ENCODE measurements at regions of chr4 and their contacts with region 1.

Region 1: DNA sequence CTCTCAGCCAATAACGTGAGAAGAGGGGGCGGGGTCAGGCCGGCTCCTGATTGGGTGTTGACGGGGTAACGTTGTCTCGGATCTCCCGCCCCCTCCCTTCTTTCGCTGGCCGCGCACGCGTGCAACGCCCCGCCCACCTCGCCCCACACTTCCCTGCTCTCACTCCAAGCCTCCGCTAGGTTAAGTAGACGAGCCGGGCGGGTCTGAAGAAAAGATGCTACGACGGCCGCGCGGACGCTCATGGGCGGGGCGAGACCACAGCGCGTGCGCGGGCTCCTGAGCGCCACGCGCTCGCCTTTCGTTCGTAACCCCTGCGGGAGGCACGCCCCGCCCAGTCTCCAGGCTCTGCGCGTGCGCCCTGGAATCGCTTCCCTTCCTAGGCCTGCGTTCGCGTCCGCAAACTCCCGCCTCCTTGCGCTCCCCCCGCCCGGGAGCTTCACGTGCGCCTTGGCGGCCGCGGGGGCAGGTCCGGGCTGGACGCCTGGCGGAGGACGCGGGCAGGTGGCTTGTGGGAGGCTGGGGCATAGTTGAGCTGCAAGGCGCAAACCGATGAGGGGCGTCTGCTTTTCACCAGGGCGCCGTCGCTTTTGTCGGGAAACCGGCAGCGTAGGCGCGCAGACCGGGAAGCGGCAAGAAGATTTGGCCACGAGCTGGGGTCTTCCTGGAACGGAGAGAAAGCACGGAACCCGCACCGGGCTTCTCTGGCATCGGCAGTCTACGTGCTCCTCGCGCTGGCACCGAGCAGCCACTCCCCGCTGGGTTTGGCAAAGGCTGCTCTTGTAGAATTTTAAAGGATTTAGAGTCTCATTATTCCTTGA is 467 bp upstream of the PGRMC2 start:
- DNase-seq: peak; percentile 99
- H3K4me3 Mint-ChIP-seq: peak overlapping the region; percentile 85
- H3K27ac Mint-ChIP-seq: peak overlapping the region; percentile 94
- H3K4me1 Mint-ChIP-seq: peaks cover 19% of the 10 kb centered on the region
- H3K27me3 Mint-ChIP-seq: no peaks in the 10 kb centered on the region

Region 2: DNA sequence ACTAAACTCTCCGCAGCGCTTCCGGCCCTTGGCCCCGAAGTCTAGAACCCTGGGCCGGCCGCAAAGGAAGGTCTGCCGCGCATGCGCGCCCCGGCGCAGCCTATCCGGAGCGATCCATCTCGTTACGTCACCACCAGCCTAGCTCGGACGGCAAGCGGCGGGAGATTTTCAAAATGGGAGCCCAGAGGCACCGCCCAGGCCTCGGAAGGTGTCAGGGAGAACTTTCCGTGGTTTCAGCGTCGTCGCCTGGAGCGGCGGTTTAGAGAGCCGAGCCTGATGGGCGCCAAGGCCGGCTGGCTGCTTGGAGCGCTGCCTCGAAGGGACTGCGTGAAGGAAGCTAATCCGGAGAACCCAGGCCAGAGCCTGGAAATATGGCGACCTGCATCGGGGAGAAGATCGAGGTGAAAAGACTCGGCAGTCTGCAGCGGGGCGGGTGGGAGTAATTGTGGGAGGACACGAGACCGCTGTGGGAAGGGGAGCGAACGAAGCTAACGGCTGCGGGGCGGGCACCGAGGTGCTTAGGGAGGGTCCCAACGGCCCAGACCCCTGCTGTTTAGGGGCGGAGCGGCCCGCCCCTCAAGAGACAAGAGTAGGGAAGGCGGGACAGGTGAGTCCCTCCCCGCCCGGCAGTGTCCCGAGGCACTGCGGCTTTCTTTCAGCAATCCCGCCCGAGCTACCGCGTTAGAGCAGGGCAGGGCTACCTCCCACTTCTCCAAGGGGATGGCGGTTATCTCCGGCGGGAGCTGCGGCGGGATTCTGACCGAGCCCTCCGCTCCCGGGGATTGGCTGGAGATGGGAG is 407.1 kb before region 1 on chr4 and contains the start of gene PLK4:
- intact Hi-C with region 1: loop called (anchors 1 kb)
- DNase-seq: peak; percentile 99
- H3K4me3 Mint-ChIP-seq: peak within 1 kb of the TSS; percentile 97
- H3K27ac Mint-ChIP-seq: peak within 1 kb of the TSS; percentile 93
- H3K4me1 Mint-ChIP-seq: peaks cover 25% of the 10 kb centered on the region
- H3K27me3 Mint-ChIP-seq: peaks cover 2% of the 10 kb centered on the region
- total RNA-seq, gene PLK4: 44.5 and 44.7 TPM in 2 replicates

Region 3: GRCh38 chr4:128060699-128061565 is 227.1 kb before region 1 on chr4 and contains the start of gene LARP1B:
- intact Hi-C with region 1: loop called (anchors 1 kb)
- DNase-seq: peak; percentile 98
- H3K4me3 Mint-ChIP-seq: peak within 1 kb of the TSS; percentile 90
- H3K27ac Mint-ChIP-seq: peak within 1 kb of the TSS; percentile 94
- H3K4me1 Mint-ChIP-seq: peaks cover 11% of the 10 kb centered on the region
- H3K27me3 Mint-ChIP-seq: peaks cover 3% of the 10 kb centered on the region
- total RNA-seq, gene LARP1B: 31.1 and 32.6 TPM in 2 replicates

Region 4: GRCh38 chr4:128275346-128275745 is 12.7 kb before region 1 on chr4:
- intact Hi-C with region 1: no loop called
- DNase-seq: no peak
- H3K4me3 Mint-ChIP-seq: no peak overlapping the region
- H3K27ac Mint-ChIP-seq: no peak overlapping the region
- H3K4me1 Mint-ChIP-seq: peaks cover 6% of the 10 kb centered on the region
- H3K27me3 Mint-ChIP-seq: no peaks in the 10 kb centered on the region

Region 5: GRCh38 chr4:128513664-128514484 is 225.8 kb after region 1 on chr4:
- intact Hi-C with region 1: loop called (anchors 1 kb)
- DNase-seq: peak; percentile 61
- H3K4me3 Mint-ChIP-seq: peak overlapping the region; percentile 49
- H3K27ac Mint-ChIP-seq: peak overlapping the region; percentile 78
- H3K4me1 Mint-ChIP-seq: peaks cover 18% of the 10 kb centered on the region
- H3K27me3 Mint-ChIP-seq: no peaks in the 10 kb centered on the region

Region 6: DNA sequence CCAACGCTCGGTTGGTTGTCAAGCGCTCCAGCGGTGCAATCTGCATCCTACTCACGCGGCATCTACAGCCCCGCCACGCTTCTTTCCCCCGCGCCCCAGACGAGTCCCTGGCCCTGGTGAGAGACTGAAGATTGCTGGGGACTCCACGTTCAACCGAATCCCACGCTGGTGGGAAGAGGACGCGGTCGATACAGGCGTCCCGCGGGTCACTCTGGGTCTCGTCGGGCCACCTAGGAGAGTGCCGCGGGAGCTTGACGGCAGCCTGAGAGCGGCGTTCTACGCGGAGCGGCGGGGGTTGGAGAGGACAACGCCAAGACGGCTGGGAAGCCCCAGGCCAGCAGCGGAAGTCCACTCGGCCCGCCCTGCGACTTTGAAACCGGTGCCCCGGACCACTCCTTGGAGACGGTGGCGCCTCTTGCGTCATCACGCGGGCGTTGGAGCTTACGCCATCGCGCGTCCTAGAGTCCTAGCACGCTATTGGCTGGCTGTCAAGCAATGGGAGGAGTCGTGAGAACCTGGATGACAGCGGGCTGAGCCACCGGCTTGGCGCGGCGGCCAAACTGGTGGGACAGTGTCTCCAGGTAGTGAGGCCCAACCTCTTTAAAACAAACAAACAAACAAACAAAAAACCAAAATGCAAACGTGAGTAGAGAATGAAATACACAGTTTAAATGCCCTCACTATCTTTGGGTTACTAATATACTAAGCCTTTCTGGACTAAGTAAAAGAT is 805.3 kb after region 1 on chr4 and contains the start of gene SCLT1:
- intact Hi-C with region 1: loop called (anchors 1 kb)
- DNase-seq: peak; percentile 99
- H3K4me3 Mint-ChIP-seq: peak within 1 kb of the TSS; percentile 53
- H3K27ac Mint-ChIP-seq: peak within 1 kb of the TSS; percentile 31
- H3K4me1 Mint-ChIP-seq: peaks cover 42% of the 10 kb centered on the region
- H3K27me3 Mint-ChIP-seq: no peaks in the 10 kb centered on the region
- total RNA-seq, gene SCLT1: 24.2 and 25.4 TPM in 2 replicates

Measured in activated CD4-positive, alpha-beta T cell treated with anti-CD3 and anti-CD28 coated beads, Interleukin-2, amount 10 ng/mL, durations not matched to agents 24 days and 14 days (primary cell).